ENCODE measurements at regions of chr17 and their contacts with region 1.

Region 1: GRCh38 chr17:1516388-1517161 is at the start of gene INPP5K:
- DNase-seq: peak; percentile 84
- H3K4me3 ChIP-seq: peak within 1 kb of the TSS; percentile 97
- CTCF ChIP-seq: no peak

Region 2: DNA sequence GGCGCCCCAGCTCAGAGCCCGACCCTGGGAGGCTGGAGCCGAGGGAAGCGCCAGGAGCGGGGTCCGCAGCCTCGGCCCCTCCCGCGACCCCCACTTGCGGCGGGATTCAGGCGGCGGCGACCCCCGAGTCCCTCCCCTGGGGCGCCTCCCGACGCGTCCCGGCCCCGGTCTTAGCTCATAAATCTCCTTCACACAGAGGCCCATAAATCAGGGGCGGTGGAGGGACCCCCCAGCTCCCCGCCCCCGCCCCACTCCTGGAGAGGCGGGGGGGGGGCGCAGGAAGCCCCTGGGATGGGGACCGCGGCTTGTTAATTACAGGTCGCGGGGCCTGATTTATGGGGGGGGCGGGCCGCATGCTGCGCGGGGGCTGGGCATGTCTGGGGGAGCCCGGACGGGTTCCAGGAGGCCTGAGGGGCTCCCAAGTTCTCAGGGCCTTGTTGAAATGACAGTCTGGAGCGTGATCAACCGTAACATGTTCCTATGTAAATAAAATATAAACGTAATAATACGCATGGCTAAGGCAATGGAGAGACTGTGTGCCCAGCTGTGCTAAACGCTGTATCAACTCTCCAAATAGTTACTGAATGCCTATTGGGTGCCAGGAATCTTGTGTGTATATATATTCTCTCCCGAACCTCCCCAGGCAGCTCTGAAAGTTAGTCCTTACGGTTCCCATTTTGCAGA is 256.3 kb before region 1 on chr17:
- CTCF ChIA-PET with region 1: interaction called, 55 read pairs
- POLR2A ChIA-PET with region 1: no interaction called
- DNase-seq: no peak
- H3K4me3 ChIP-seq: peak overlapping the region; percentile 66
- CTCF ChIP-seq: no peak

Region 3: DNA sequence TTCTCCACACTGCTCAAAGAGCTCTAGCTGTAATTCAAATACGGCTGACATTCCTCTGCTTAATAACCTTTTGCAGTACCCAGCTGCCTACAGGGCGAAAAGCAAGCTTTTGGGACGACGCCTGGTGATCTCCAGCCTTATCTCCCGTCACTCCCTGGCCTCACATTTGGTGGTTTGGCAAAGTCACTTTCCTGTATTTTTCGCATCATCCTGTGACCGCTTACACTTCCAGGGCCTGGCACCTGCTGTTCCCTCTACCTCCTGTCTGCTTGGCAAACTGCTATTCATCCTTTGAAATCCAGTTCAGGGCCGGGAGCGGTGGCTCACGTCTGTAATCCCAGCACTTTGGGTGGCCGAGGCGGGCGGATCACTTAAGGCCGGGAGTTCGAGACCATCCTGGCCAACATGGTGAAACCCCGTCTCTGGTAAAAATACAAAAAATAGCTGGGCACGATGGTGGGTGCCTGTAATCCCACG is 249.1 kb before region 1 on chr17:
- CTCF ChIA-PET with region 1: interaction called, 41 read pairs
- POLR2A ChIA-PET with region 1: interaction called, 4 read pairs
- DNase-seq: no peak
- H3K4me3 ChIP-seq: peak overlapping the region; percentile 71
- CTCF ChIP-seq: no peak

Region 4: DNA sequence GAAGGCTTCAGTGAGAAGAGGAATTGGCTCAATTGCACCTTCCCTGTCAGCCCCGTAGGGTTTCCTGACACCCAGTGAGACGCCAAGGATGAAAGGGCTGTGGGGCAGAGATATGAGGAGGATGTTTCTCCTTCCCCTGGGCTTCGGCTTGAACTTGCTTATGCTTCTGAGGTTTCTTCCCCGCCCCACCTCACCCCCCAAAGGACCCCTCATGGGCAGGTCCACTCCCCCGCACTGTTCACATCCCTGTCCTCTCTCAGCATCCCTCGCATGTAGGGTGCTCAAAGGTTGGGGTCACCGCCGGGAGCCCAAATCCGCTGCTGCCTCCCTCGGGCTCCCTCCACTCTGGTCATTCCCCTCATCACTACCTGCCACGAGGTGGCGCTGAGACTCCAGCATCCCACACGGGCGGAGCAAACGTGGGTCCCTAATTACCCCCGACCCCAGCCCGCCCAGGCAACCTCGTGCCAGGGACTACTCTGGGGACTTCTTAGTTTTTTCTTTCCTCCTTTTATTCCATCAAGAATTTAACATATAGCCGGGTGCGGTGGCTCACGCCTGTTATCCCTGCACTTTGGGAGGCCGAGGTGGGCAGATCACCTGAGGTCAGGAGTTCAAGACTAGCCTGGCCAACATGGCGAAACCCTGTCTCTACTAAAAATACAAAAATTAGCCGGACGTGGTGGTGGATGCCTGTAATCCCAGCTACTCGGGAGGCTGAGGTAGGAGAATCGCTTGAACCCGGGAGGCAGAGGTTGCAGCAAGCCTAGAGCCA is 240.4 kb before region 1 on chr17:
- CTCF ChIA-PET with region 1: interaction called, 41 read pairs
- POLR2A ChIA-PET with region 1: interaction called, 4 read pairs
- DNase-seq: no peak
- H3K4me3 ChIP-seq: no peak overlapping the region
- CTCF ChIP-seq: peak; percentile 88

Region 5: DNA sequence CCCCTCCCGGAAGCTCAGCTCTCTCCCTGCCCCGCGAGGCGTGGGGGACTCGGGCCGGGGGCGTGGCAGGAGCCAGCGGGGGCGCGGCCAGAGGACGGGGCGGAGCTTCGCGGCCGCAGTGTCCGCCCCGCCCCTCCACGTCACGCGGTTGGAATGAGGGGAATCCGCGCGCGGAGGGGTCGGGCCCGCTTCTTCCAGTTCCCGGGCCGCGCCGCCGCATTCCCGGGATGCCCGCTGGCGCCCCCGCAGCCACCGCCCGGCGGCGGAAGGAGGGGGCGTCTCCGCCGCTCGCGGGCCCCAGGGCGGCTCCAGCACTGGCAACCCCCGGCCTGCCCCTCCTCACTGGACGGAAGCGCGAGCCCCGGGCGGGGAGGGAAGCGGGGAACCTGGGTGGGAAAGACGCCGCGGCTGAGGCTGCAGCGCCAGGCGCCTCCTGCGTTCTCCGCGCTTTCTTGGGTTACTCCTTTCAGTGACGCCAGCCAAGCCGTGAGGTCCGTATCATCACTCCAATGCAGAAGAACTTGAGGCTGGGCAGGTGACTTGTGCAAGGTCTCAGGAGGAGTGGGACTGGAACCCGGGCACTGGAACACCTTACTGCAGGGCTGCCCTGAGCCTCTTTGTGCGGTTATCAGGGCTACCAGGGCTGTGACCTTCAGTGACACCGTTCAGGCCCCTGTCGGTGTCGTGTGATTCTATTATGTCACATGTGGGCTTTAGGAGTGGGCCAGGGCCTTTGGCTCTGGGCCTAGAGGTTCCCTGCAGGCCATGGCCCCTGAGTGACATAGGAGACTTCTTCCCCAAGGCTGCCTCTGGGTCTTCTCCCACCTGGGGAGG is 28.3 kb before region 1 on chr17:
- CTCF ChIA-PET with region 1: interaction called, 9 read pairs
- POLR2A ChIA-PET with region 1: interaction called, 11 read pairs
- DNase-seq: no peak
- H3K4me3 ChIP-seq: peak overlapping the region; percentile 55
- CTCF ChIP-seq: no peak

Region 6: GRCh38 chr17:1498869-1499268 is 17.7 kb before region 1 on chr17:
- CTCF ChIA-PET with region 1: interaction called, 27 read pairs
- POLR2A ChIA-PET with region 1: interaction called, 8 read pairs
- DNase-seq: peak; percentile 50
- H3K4me3 ChIP-seq: no peak overlapping the region
- CTCF ChIP-seq: no peak

Region 7: DNA sequence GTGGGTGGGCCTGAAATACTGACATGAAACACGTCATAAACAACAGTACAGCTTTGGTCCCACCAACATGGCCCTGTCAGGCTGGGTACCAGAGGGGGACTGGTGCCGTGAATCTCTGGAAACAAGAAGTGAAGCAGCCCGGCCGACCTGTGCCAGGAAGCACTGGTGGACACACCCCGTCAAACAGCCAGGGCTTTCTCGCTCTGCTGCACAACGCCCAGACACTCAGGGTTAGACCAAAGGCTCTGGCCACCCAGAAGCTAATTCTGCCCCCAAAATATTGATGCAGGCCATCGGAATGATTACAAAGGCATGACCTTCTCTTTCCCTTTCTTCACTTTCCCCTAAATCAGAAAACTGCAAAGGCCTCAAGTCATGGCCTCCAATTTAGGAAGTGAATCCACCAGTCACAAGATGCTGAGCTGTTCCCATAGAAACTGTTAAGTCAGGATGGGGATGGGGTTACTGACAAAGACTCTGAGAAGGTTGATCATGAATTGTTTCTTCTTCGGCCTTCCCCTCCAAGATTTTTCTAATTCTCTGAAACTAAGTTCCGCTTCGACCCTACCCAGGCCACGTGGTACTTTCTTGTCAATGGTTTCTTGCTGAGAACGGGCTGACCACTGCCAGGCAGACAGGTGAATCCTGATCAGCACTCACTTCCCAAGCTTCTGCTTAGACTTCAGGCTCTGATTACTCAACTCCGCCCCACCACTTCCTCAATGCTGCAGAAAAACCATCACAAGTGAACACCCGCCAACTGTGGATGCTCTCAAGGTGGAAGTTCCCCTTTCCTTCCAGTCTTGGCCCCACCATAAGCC is 39.3 kb after region 1 on chr17:
- CTCF ChIA-PET with region 1: no interaction called
- POLR2A ChIA-PET with region 1: no interaction called
- DNase-seq: no peak
- H3K4me3 ChIP-seq: no peak overlapping the region
- CTCF ChIP-seq: no peak

Region 8: GRCh38 chr17:1604831-1605528 is 88.4 kb after region 1 on chr17:
- CTCF ChIA-PET with region 1: no interaction called
- POLR2A ChIA-PET with region 1: no interaction called
- DNase-seq: no peak
- H3K4me3 ChIP-seq: no peak overlapping the region
- CTCF ChIP-seq: no peak

Region 9: GRCh38 chr17:2624292-2624731 is 1107.7 kb after region 1 on chr17:
- CTCF ChIA-PET with region 1: no interaction called
- POLR2A ChIA-PET with region 1: no interaction called
- DNase-seq: no peak
- H3K4me3 ChIP-seq: no peak overlapping the region
- CTCF ChIP-seq: no peak

Measured in AG04449 (cell line).